ENCODE measurements at regions of chr2 and their contacts with region 1.

Region 1: GRCh38 chr2:27582695-27583389 is at the start of gene ZNF512:
- DNase-seq: peak; percentile 58
- H3K4me3 ChIP-seq: peak within 1 kb of the TSS; percentile 51 to 64 (median 60)
- H3K27ac ChIP-seq: peak within 1 kb of the TSS; percentile 69
- H3K4me1 ChIP-seq: peaks cover 31% of the 10 kb centered on the region
- H3K27me3 ChIP-seq: no peaks in the 10 kb centered on the region
- CTCF ChIP-seq: peak in 1 of 2 donors; percentile 16
- total RNA-seq, gene ZNF512: 13.7 to 17.2 TPM

Region 2: DNA sequence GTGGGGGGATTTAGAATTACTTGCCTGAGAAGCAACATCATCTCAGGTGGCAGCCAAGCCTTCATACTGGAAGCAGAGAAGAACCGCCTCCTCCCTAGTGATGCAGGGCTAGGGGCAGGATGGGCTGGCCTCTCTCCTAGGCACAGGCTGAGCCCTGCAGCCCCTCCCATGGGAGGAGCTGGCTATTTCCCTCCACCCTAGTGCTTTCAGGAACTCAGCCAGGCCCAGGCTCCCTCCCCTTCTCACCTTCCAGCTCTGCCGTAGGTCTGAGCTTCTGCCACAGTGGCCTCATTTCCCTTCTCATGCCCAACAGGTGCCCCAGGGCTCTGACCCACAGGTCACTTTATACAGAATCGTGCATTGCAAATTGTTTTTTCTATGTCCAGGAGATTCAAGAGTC is 765.9 kb before region 1 on chr2:
- CTCF ChIA-PET with region 1: no interaction called
- dilution Hi-C with region 1: no loop called
- in situ Hi-C with region 1: no loop called
- intact Hi-C with region 1: no loop called
- DNase-seq: peak; percentile 18
- H3K4me3 ChIP-seq: no peak overlapping the region
- H3K27ac ChIP-seq: no peak overlapping the region
- H3K4me1 ChIP-seq: no peaks in the 10 kb centered on the region
- H3K27me3 ChIP-seq: no peaks in the 10 kb centered on the region
- CTCF ChIP-seq: no peak

Region 3: DNA sequence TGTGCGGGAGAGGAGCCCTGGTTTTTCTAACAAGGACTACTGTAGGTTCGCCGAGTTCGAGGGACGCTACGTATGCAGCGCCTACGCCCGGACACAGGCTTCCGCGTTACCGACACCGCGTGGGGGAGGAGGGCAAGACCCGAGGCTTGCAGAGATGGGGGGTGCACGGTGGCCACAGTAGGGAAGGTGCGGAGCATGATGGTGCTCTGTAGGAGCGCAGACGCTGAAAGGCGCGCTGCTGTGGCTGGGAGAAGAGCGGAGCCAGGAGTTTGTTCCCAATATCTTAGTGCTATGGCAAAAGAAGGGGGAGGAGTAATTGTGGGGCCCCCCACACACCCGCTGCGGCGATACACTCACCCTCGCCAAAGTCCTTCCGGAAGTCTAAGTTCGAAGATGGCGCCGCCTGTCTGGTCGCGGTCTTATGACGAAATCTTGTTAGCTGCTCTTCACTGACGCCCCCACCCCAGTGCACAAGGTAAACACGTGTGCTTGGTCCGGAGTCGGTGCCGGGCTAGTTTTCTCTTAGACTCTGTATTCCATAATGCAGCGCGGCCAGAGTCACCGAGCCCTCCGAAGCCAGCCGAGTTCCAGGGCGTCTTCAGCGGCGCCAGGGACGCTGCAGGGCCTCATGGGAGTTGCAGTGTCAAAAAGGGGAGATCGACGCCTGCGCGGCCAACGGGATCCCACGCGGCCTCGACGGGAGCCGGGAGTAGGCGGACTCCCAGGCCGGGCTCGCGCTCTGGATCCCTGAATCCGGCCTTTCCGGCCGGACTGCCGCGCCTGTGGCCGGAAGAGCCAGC is 226.3 kb before region 1 on chr2 and contains the start of gene GTF3C2:
- CTCF ChIA-PET with region 1: no interaction called
- dilution Hi-C with region 1: no loop called
- in situ Hi-C with region 1: no loop called
- intact Hi-C with region 1: no loop called
- DNase-seq: peak; percentile 98
- H3K4me3 ChIP-seq: peak within 1 kb of the TSS; percentile 74 to 92 (median 89)
- H3K27ac ChIP-seq: peak within 1 kb of the TSS; percentile 88
- H3K4me1 ChIP-seq: peaks cover 16% of the 10 kb centered on the region
- H3K27me3 ChIP-seq: no peaks in the 10 kb centered on the region
- CTCF ChIP-seq: no peak
- total RNA-seq, gene GTF3C2: 26.7 to 55.5 TPM

Region 4: GRCh38 chr2:27501042-27501441 is 81.8 kb before region 1 on chr2:
- CTCF ChIA-PET with region 1: no interaction called
- dilution Hi-C with region 1: loop called (anchors 5 kb)
- in situ Hi-C with region 1: no loop called
- intact Hi-C with region 1: no loop called
- DNase-seq: peak; percentile 76
- H3K4me3 ChIP-seq: no peak overlapping the region
- H3K27ac ChIP-seq: no peak overlapping the region
- H3K4me1 ChIP-seq: peaks cover 24% of the 10 kb centered on the region
- H3K27me3 ChIP-seq: no peaks in the 10 kb centered on the region
- CTCF ChIP-seq: no peak

Region 5: GRCh38 chr2:27628767-27629709 is 46.2 kb after region 1 on chr2 and contains the starts of genes CCDC121 and GPN1:
- CTCF ChIA-PET with region 1: no interaction called
- dilution Hi-C with region 1: no loop called
- in situ Hi-C with region 1: no loop called
- intact Hi-C with region 1: no loop called
- DNase-seq: peak; percentile 93
- H3K4me3 ChIP-seq: peak within 1 kb of the TSS; percentile 56 to 90 (median 70)
- H3K27ac ChIP-seq: peak within 1 kb of the TSS; percentile 90
- H3K4me1 ChIP-seq: peaks cover 23% of the 10 kb centered on the region
- H3K27me3 ChIP-seq: no peaks in the 10 kb centered on the region
- CTCF ChIP-seq: no peak
- total RNA-seq, gene CCDC121: 1.2 to 1.9 TPM
- total RNA-seq, gene GPN1: 42.9 to 46.8 TPM

Region 6: DNA sequence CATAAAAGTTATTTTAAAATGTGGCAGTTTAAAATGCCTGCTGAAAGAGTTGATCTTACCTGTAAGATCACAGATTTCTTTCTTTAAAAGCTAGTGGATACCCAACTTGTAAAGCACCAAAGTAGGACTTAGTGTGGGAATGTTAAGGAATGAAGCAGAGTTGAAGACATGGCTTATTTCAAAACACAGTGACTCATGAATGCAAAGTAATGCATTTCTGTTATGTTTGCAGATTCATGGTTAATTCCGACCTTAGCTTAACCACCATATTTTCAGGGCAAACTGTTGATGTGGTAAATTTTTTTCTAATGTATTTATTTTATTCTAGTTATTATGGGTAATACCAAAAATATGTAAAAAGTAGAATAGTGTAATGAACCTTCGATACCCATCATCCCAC is 603.0 kb after region 1 on chr2:
- CTCF ChIA-PET with region 1: no interaction called
- dilution Hi-C with region 1: no loop called
- in situ Hi-C with region 1: no loop called
- intact Hi-C with region 1: no loop called
- DNase-seq: peak; percentile 70
- H3K4me3 ChIP-seq: no peak overlapping the region
- H3K27ac ChIP-seq: peak overlapping the region; percentile 93
- H3K4me1 ChIP-seq: peaks cover 17% of the 10 kb centered on the region
- H3K27me3 ChIP-seq: no peaks in the 10 kb centered on the region
- CTCF ChIP-seq: no peak